ENCODE measurements at regions of chr14 and their contacts with region 1.

Region 1: DNA sequence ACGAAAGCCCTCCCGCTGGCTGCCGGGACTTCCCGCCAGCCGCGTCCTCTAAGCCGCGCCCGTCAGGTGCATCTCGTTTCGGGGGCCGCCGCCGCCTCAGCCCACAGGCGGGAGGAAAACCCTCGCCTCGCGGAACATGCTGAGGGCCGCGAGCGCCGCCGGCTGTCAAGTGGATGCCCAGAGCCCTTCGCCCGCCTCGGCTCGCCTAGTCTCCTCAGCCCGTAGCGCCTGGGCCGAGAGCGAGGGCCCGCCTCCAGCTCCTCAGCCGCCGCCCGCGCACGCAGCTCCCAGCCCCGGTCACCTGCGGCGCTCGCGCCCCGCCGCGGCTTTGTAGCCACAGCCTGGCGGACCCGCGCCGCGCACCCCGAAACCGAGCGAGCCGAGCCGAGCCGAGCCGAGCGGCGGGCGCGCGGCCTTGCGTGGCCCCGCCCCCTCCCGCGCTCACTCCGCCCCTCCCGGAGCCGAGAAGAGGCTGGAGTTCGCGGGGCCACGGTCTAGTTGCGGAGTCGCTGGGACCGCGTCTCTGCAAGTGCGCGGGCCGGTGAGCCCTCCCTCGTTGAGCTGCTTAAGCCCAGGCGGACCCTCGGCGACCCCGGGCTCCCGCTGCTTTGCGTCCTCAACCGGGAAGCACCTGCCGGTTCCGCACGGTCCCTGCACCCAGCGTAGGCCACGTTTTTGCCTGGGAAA is at the start of gene EML5:
- H3K4me3 ChIP-seq: peak within 1 kb of the TSS; percentile 81
- H3K27ac ChIP-seq: peak within 1 kb of the TSS; percentile 92
- H3K4me1 ChIP-seq: peaks cover 16% of the 10 kb centered on the region
- CTCF ChIP-seq: no peak; the same call in 1 of the 2 replicates

Region 2: GRCh38 chr14:88824314-88825077 is 31.8 kb after region 1 on chr14 and contains the start of gene TTC8:
- CTCF ChIA-PET with region 1: interaction called, 5 read pairs
- POLR2A ChIA-PET with region 1: interaction called, 11 read pairs
- H3K4me3 ChIP-seq: peak within 1 kb of the TSS; percentile 93
- H3K27ac ChIP-seq: peak within 1 kb of the TSS; percentile 91
- H3K4me1 ChIP-seq: peaks cover 4% of the 10 kb centered on the region; the same call in 1 of the 2 replicates
- CTCF ChIP-seq: no peak

Measured in HEK293 (cell line).